ENCODE measurements at regions of chr5 and their contacts with region 1.

Region 1: GRCh38 chr5:136062366-136063274 is 33.8 kb downstream of the TGFBI start:
- DNase-seq: no peak
- H3K4me3 ChIP-seq: no peak overlapping the region
- CTCF ChIP-seq: peak; percentile 38

Region 2: GRCh38 chr5:135944967-135945560 is 117.6 kb before region 1 on chr5:
- CTCF ChIA-PET with region 1: interaction called, 55 read pairs
- POLR2A ChIA-PET with region 1: no interaction called
- DNase-seq: peak; percentile 56
- H3K4me3 ChIP-seq: no peak overlapping the region
- CTCF ChIP-seq: peak; percentile 64

Region 3: GRCh38 chr5:136011414-136012001 is 51.1 kb before region 1 on chr5:
- CTCF ChIA-PET with region 1: interaction called, 10 read pairs
- POLR2A ChIA-PET with region 1: no interaction called
- DNase-seq: no peak
- H3K4me3 ChIP-seq: no peak overlapping the region
- CTCF ChIP-seq: no peak

Region 4: GRCh38 chr5:136037001-136037705 is 25.5 kb before region 1 on chr5:
- CTCF ChIA-PET with region 1: interaction called, 20 read pairs
- POLR2A ChIA-PET with region 1: interaction called, 9 read pairs
- DNase-seq: no peak
- H3K4me3 ChIP-seq: no peak overlapping the region
- CTCF ChIP-seq: no peak

Region 5: GRCh38 chr5:136073714-136074529 is 11.3 kb after region 1 on chr5:
- CTCF ChIA-PET with region 1: interaction called, 15 read pairs
- POLR2A ChIA-PET with region 1: no interaction called
- DNase-seq: no peak
- H3K4me3 ChIP-seq: no peak overlapping the region
- CTCF ChIP-seq: no peak

Region 6: DNA sequence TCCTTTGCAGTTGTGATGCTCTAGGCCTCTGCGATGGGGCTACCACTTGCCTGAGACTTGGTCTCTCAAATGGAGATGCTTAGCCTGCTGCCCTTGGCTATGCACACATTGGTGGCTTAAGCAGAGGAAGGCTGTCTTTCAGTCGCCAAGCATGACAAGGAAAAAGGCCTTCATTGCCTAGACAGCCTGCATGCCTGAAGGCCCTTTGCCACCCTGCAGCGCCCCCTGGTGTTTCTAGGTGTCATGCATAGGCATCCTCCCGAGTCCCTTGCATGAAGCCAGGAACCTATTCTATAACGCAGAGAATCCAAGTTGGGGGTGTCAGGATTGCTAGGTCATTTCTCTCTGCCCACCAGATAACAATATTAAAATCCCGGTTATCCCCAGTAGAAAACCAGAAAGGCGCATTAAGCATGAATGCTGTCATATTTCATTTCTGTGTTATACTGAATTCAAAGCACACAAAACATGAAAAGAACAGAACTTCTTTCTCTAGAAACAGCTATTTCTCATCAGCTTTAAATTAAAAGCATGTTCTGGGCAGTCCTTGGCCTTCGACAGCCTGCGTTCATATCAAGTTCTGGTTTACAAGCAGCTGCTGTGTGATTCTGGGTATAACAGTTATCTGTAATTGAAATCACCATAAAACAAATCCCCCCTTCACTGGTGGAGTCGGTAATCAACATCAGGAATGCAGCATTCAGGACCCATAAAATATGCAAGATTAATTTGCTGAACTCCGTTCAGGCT is 362.4 kb after region 1 on chr5:
- CTCF ChIA-PET with region 1: no interaction called
- POLR2A ChIA-PET with region 1: no interaction called
- DNase-seq: no peak
- H3K4me3 ChIP-seq: no peak overlapping the region
- CTCF ChIP-seq: peak; percentile 84

Measured in AG04449 (cell line).